ENCODE measurements at regions of chr12 and their contacts with region 1.

Region 1: DNA sequence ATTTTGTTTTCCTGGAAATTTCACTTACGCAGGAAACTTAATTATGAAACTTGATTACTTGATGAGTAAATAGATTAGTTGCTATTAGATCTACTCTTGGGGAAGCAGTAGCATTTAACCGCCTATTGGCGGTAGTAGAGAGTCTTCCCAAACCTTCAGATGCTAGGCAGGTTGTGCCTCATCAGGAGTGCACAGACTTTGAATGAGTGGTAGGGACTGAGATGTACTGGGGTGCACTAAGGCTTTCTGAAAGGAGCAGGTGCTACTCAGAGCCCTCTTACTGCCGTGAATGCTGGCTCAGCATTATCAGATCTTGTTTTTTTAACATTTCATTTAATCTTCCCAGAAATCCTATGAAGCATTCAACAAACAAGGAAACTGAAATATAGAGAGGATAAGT is 7.7 kb downstream of the GATC start:
- DNase-seq: peak; percentile 52
- H3K4me3 ChIP-seq: no peak overlapping the region
- H3K27ac ChIP-seq: no peak overlapping the region
- H3K4me1 ChIP-seq: no peaks in the 10 kb centered on the region
- H3K27me3 ChIP-seq: no peaks in the 10 kb centered on the region
- CTCF ChIP-seq: peak; percentile 76

Region 2: GRCh38 chr12:119877639-119877948 is 576.4 kb before region 1 on chr12:
- CTCF ChIA-PET with region 1: no interaction called
- POLR2A ChIA-PET with region 1: no interaction called
- intact Hi-C with region 1: no loop called
- DNase-seq: no peak
- H3K4me3 ChIP-seq: peak overlapping the region; percentile 92
- H3K27ac ChIP-seq: peak overlapping the region; percentile 85
- H3K4me1 ChIP-seq: peaks cover 4% of the 10 kb centered on the region
- H3K27me3 ChIP-seq: no peaks in the 10 kb centered on the region
- CTCF ChIP-seq: no peak

Region 3: DNA sequence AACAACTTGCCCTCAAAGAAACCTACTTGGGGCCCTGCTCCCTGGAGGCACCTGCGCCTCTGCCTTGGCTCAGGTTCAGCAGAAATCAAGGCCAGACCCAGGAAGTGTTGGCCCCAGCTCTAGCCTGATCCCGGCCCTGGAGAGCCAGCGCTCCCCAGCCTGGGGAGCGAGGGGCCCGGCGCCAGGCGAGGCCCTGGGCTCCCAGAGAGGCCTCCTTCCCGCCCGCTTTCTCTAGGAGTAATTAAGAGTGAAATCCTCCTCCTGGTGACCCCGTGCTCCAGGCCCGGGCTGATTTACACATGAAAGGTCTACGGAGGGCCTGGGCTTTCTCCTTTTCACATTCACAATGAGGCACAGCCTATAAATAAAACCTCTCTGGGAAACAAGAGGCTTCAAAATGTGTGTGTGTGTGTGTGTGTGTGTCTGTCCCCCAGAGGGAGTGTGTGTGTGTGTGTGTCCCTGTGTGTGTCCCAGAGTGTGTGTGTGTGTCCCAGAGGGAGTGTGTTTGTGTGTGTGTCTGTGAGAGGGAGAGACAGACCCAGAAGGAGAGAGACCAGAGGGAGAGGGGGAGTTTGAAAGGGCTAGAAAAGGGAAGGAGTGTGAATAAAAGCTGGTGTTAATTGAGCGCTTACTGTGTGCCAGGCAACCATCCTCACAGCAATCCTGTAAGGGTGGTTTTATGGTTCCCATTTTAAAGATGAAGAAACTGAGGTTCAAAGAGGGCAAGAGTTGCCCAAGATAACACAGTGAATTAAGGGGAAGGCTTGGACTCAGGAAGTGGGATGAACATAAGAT is 39.9 kb before region 1 on chr12:
- CTCF ChIA-PET with region 1: no interaction called
- POLR2A ChIA-PET with region 1: no interaction called
- intact Hi-C with region 1: no loop called
- DNase-seq: no peak
- H3K4me3 ChIP-seq: no peak overlapping the region
- H3K27ac ChIP-seq: no peak overlapping the region
- H3K4me1 ChIP-seq: no peaks in the 10 kb centered on the region
- H3K27me3 ChIP-seq: no peaks in the 10 kb centered on the region
- CTCF ChIP-seq: no peak

Region 4: DNA sequence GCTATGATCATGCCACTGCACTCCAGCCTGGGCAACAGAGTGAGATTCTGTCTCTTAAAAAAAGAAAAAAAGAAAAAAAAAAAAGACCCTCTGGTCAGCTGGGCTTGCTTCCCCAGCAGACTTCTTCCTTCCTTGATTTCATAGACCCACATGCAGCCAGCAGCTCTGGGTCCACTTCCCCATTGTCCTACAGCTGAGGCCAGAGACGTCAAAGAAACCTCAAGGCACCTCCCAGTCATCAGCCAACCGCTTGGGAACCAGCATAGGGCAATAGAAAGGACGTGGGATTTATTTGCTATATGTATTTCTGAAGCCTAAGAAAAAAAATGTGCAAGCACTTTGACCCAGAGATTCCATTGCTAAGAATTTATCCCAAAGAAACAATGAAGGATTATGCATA is 485.5 kb after region 1 on chr12:
- CTCF ChIA-PET with region 1: interaction called, 10 read pairs
- POLR2A ChIA-PET with region 1: no interaction called
- intact Hi-C with region 1: no loop called
- DNase-seq: no peak
- H3K4me3 ChIP-seq: no peak overlapping the region
- H3K27ac ChIP-seq: no peak overlapping the region
- H3K4me1 ChIP-seq: no peaks in the 10 kb centered on the region
- H3K27me3 ChIP-seq: no peaks in the 10 kb centered on the region
- CTCF ChIP-seq: no peak